ENCODE measurements at regions of chrX and their contacts with region 1.

Region 1: GRCh38 chrX:71547339-71547738 is 14.4 kb downstream of the OGT start:
- DNase-seq: no peak
- H3K4me3 ChIP-seq: no peak overlapping the region
- H3K27ac ChIP-seq: no peak overlapping the region
- H3K4me1 ChIP-seq: peaks cover 7% of the 10 kb centered on the region
- H3K27me3 ChIP-seq: peaks cover 2% of the 10 kb centered on the region
- CTCF ChIP-seq: no peak

Region 2: DNA sequence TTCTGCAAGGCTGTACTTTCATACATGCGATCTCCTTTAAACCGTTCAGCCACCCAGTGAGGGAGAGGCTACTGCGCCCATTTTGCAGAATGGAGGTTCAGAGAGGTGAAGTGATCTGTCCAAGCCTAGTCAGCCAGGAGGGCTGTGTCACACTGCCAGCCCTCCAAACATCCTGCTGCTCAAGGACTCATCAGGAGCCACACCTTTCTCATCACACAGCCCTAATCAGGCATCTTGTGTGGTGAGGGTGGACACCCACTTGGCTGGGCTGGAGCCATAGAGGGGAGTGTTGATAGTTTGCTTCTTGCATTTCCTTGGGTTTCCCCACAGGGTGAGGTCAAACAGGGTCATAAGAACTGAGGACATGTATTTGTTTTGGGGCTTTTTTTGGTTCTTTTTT is 76.4 kb after region 1 on chrX:
- CTCF ChIA-PET with region 1: no interaction called
- dilution Hi-C with region 1: no loop called
- in situ Hi-C with region 1: no loop called
- intact Hi-C with region 1: loop called (anchors 2 kb)
- DNase-seq: no peak
- H3K4me3 ChIP-seq: no peak overlapping the region
- H3K27ac ChIP-seq: no peak overlapping the region
- H3K4me1 ChIP-seq: peaks cover 8% of the 10 kb centered on the region
- H3K27me3 ChIP-seq: no peaks in the 10 kb centered on the region
- CTCF ChIP-seq: no peak

Measured in mammary epithelial cell (primary cell).